ENCODE measurements at regions of chr1 and their contacts with region 1.

Region 1: GRCh38 chr1:109532365-109533136 is 7.1 kb upstream of the GPR61 start:
- DNase-seq: peak; percentile 94
- ATAC-seq: peak; percentile 90
- H3K4me3 Mint-ChIP-seq: peak overlapping the region; percentile 48
- H3K27ac Mint-ChIP-seq: peak overlapping the region; percentile 91
- H3K4me1 Mint-ChIP-seq: peaks cover 23% of the 10 kb centered on the region
- H3K27me3 Mint-ChIP-seq: no peaks in the 10 kb centered on the region

Region 2: GRCh38 chr1:109186733-109187086 is 345.8 kb before region 1 on chr1:
- CTCF ChIA-PET with region 1: no interaction called
- DNase-seq: no peak
- ATAC-seq: no peak
- H3K4me3 Mint-ChIP-seq: no peak overlapping the region
- H3K27ac Mint-ChIP-seq: no peak overlapping the region
- H3K4me1 Mint-ChIP-seq: peaks cover 4% of the 10 kb centered on the region
- H3K27me3 Mint-ChIP-seq: no peaks in the 10 kb centered on the region

Region 3: DNA sequence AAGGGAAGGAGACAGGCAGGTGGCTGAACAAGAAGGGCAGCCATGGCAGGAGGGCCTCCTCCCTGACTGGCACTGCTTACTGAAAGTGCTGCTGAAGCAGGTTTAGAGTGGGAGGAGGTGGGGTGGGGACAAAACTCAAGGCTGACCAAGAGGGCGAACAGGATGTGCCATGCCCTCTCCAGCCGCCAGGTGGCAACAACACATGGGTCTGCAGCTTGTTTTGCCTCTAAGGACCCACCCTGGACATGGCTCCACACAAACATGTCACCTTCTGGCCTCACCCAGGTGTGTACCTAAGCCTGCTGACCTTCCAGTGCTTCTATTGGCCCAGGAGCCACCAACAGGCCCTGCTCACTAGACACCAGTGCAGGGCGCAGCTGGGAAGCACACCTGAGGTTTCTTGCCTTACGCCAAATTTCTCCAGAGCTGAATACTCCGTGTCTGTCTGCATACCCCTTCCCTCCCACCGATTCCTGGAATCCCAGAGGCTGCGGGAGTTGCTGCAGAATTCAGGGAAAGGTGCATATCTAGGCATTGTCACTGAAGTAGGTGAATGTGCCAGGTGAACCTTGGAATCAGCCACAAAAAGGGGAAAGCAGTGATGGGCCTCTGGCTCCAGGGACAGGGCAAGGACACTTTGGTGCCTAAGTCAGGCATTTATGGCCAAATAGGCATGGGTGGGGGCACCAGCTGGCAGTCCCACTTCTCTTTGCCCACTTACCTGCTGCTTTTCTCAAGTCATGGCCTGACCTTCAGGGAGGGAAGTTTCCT is 254.9 kb before region 1 on chr1:
- CTCF ChIA-PET with region 1: interaction called, 62 read pairs
- DNase-seq: peak; percentile 83
- ATAC-seq: peak; percentile 83
- H3K4me3 Mint-ChIP-seq: no peak overlapping the region
- H3K27ac Mint-ChIP-seq: peak overlapping the region; percentile 44
- H3K4me1 Mint-ChIP-seq: peaks cover 22% of the 10 kb centered on the region
- H3K27me3 Mint-ChIP-seq: no peaks in the 10 kb centered on the region

Region 4: GRCh38 chr1:109404838-109405237 is 127.7 kb before region 1 on chr1:
- CTCF ChIA-PET with region 1: interaction called, 77 read pairs
- DNase-seq: peak; percentile 44
- ATAC-seq: peak; percentile 82
- H3K4me3 Mint-ChIP-seq: peak overlapping the region; percentile 19
- H3K27ac Mint-ChIP-seq: peak overlapping the region; percentile 80
- H3K4me1 Mint-ChIP-seq: peaks cover 19% of the 10 kb centered on the region
- H3K27me3 Mint-ChIP-seq: no peaks in the 10 kb centered on the region

Region 5: DNA sequence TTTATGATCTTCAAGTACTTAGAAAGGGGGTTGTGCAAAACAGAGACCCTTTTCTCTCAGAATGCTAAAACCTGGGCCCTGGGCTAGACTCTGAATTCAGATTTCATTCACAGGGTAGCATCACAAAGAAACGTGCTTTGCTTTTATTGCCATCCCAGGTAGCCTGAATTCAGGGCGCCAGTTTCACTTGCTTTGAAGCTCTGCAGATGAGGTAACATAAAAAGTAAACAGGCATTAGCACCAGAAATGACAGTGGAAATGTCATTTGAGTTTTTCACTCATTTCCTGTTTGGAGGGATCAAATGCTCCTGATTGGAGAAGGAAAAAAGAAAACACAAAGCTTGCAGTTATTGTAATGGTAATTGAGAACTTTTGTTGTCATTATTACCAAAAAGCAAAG is 63.6 kb before region 1 on chr1:
- CTCF ChIA-PET with region 1: interaction called, 10 read pairs
- DNase-seq: no peak
- ATAC-seq: no peak
- H3K4me3 Mint-ChIP-seq: no peak overlapping the region
- H3K27ac Mint-ChIP-seq: no peak overlapping the region
- H3K4me1 Mint-ChIP-seq: peaks cover 5% of the 10 kb centered on the region
- H3K27me3 Mint-ChIP-seq: peaks cover 77% of the 10 kb centered on the region

Region 6: GRCh38 chr1:109548321-109549267 is 16.0 kb after region 1 on chr1 and contains the start of gene GNAI3:
- CTCF ChIA-PET with region 1: interaction called, 67 read pairs
- DNase-seq: peak; percentile 99
- ATAC-seq: peak; percentile 94
- H3K4me3 Mint-ChIP-seq: peak within 1 kb of the TSS; percentile 95
- H3K27ac Mint-ChIP-seq: peak within 1 kb of the TSS; percentile 98
- H3K4me1 Mint-ChIP-seq: peaks cover 35% of the 10 kb centered on the region
- H3K27me3 Mint-ChIP-seq: no peaks in the 10 kb centered on the region
- total RNA-seq, gene GNAI3: 7.5 to 8.3 TPM

Region 7: GRCh38 chr1:109850194-109850593 is 317.6 kb after region 1 on chr1:
- CTCF ChIA-PET with region 1: no interaction called
- DNase-seq: no peak
- ATAC-seq: no peak
- H3K4me3 Mint-ChIP-seq: no peak overlapping the region
- H3K27ac Mint-ChIP-seq: no peak overlapping the region
- H3K4me1 Mint-ChIP-seq: no peaks in the 10 kb centered on the region
- H3K27me3 Mint-ChIP-seq: peaks cover 2% of the 10 kb centered on the region

Region 8: GRCh38 chr1:109984456-109985275 is 452.1 kb after region 1 on chr1 and contains the start of gene AHCYL1:
- CTCF ChIA-PET with region 1: interaction called, 16 read pairs
- DNase-seq: peak; percentile 100
- ATAC-seq: peak; percentile 98
- H3K4me3 Mint-ChIP-seq: peak within 1 kb of the TSS; percentile 99
- H3K27ac Mint-ChIP-seq: peak within 1 kb of the TSS; percentile 98
- H3K4me1 Mint-ChIP-seq: peaks cover 43% of the 10 kb centered on the region
- H3K27me3 Mint-ChIP-seq: no peaks in the 10 kb centered on the region
- total RNA-seq, gene AHCYL1: 67.6 to 70.0 TPM

Measured in activated CD8-positive, alpha-beta memory T cell treated with anti-CD3 and anti-CD28 coated beads, Interleukin-2, amount 10 ng/mL, durations not matched to agents 7 days and 5 days (primary cell).